ENCODE measurements at regions of chr22 and their contacts with region 1.

Region 1: DNA sequence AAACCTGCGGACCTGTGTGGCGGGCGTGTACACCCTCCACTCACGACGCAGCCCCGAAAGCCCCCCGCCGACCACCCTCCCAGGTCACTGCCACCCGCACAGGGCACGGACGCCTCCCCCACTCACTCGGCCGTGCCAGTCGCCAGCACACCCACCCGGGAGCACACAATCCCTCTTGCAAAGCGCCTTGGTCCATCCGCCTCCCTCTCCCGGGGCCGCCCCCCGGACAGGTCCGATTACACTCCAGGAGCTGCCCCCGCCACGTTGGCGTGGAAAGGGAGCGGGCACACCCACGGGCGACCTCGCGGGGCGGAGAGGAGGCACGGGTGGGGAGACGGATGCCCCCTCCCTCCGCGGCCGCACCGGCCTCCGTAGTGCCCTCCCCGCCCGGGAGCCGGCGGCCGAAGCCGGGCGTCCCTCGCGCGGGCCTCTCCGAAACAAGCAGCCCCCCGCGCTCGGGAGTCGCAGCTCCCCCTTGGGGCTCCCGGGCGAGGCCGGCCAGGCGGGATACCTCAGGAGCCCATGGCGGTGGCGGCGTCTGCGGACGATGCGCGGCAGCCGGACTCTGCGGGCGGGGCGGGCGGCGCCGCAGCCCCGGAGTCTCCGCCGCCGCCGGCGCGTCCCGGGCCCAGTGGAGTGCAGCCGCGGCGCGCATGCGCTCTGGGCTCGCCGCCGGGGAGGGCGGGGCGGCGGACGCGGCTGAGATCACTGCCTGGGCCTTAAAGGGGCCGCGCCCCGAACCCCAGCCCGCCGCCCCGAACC is at the start of gene TMEM184B:
- DNase-seq: peak; percentile 74 to 90 (median 85)
- H3K4me3 ChIP-seq: peak within 1 kb of the TSS; percentile 74 to 91
- H3K4me3 Mint-ChIP-seq: peak within 1 kb of the TSS; percentile 90 to 95 (median 94)
- H3K27ac ChIP-seq: peak within 1 kb of the TSS; percentile 90
- H3K27ac Mint-ChIP-seq: peak within 1 kb of the TSS; percentile 95 to 98 (median 97)
- H3K4me1 ChIP-seq: peaks cover 46% of the 10 kb centered on the region
- H3K4me1 Mint-ChIP-seq: peaks cover 40 to 62% (median 52%) of the 10 kb centered on the region in 4 donors
- H3K27me3 ChIP-seq: no peaks in the 10 kb centered on the region
- H3K27me3 Mint-ChIP-seq: peaks cover 0 to 1% of the 10 kb centered on the region in 2 donors
- total RNA-seq, gene TMEM184B: 35.7 to 36.6 TPM

Region 2: DNA sequence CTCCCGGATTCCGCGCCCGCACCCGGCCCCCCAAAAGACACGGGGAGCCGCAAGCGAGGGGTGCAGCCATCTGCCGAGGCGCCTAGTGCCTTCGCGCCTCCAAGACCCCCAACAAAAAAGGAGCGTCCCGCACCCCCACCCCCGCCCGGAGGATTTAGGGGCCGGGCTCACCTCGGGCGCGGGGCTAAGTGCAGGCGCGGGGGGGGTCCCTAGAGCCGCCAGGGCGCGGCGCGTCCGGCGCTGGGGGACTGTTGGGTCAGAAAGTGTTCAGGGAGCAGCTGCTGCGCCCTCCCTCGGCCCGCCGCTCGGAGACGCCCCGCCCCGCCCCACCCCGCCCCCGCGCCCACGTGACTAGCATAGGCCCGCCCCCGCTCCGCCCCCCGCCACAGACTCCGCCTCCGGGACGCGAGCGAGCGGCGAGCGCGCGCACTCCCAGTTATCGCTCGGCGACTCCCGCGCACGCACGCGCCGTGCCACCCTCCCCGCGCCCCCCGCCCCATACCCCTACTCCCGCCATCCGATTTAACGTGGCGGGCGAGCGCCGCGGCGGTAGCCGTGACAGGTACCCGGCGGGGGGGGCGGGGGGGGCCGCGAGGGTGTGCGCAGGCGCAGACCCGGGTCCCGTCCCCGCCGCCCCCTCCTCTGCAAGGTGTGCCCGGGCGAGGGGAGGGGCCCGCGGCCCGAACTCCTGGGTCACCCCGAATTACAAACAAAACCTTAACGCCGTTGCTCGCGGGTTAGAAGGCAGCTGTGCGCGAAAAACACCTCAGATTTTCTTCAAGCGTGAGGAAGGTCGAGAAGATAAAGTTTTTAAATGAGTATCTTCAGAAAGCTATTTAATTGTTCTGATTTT is 126.3 kb after region 1 on chr22:
- CTCF ChIA-PET with region 1: no interaction called
- POLR2A ChIA-PET with region 1: no interaction called
- intact Hi-C with region 1: loop called (anchors 2 kb)
- DNase-seq: peak; percentile 78 to 85 (median 82)
- H3K4me3 ChIP-seq: peak overlapping the region; percentile 47 to 52
- H3K4me3 Mint-ChIP-seq: peak overlapping the region; percentile 78 to 89 (median 83)
- H3K27ac ChIP-seq: peak overlapping the region; percentile 46
- H3K27ac Mint-ChIP-seq: peak overlapping the region; percentile 37 to 88 (median 79)
- H3K4me1 ChIP-seq: peaks cover 35% of the 10 kb centered on the region
- H3K4me1 Mint-ChIP-seq: peaks cover 16 to 40% (median 23%) of the 10 kb centered on the region in 4 donors
- H3K27me3 ChIP-seq: no peaks in the 10 kb centered on the region
- H3K27me3 Mint-ChIP-seq: peaks cover 0 to 3% of the 10 kb centered on the region in 2 donors

Measured in CD4-positive, alpha-beta memory T cell (primary cell).